ENCODE measurements at regions of chr2 and their contacts with region 1.

Region 1: GRCh38 chr2:219498280-219499057 is at the start of gene GMPPA:
- DNase-seq: peak; percentile 98
- ATAC-seq: peak; percentile 94
- H3K4me3 Mint-ChIP-seq: peak within 1 kb of the TSS; percentile 87
- H3K27ac Mint-ChIP-seq: peak within 1 kb of the TSS; percentile 78
- H3K4me1 Mint-ChIP-seq: peaks cover 31% of the 10 kb centered on the region
- H3K27me3 Mint-ChIP-seq: peaks cover 40% of the 10 kb centered on the region
- total RNA-seq, gene GMPPA: 36.5 to 42.6 TPM

Region 2: DNA sequence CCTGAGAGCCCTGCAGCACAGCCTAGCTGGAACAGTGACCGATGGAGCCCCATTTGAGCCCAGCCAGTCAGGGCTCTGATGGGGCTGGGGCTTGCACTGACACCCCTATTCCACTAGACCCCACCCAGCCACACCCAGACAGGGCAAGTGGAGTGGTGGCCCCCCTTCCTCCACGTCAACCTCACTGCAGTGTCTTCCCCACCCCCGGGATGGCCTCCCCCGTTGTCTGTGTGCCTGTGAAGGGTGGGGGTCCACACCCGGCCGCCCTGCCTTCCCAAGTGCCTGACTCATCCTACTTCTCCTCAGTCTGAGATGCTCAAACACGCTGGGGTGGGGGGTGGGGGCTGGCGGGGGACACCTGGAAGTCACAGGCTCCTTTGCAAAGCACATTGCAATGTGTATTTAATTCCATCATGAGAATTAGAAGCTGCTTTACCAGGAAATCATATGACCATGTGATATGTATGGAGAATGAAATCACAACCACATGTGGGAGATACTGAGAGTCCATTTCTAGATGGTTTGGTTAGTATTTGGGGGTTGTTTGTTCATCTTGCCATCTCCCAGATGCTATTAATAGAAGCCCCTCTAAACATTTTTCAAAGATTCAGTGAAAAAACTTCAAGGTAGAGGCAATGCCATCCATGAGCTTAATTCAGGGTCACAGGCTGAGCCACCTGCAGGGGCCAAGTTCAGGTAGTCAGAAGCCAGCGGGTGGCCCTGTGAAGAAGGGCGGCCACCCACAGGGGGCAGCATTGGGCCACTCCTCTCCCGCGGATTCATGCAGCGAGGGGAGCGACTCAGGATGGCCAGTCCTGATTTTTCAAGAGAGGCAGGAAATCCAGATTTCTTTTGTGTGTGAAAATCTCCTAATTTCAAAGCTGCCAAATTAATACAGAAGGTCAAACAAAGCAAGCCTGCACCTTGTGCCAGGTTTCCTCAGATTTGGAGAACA is 22.5 kb before region 1 on chr2:
- CTCF ChIA-PET with region 1: interaction called, 14 read pairs
- DNase-seq: peak; percentile 70
- ATAC-seq: peak; percentile 77
- H3K4me3 Mint-ChIP-seq: no peak overlapping the region
- H3K27ac Mint-ChIP-seq: no peak overlapping the region
- H3K4me1 Mint-ChIP-seq: no peaks in the 10 kb centered on the region
- H3K27me3 Mint-ChIP-seq: no peaks in the 10 kb centered on the region

Region 3: DNA sequence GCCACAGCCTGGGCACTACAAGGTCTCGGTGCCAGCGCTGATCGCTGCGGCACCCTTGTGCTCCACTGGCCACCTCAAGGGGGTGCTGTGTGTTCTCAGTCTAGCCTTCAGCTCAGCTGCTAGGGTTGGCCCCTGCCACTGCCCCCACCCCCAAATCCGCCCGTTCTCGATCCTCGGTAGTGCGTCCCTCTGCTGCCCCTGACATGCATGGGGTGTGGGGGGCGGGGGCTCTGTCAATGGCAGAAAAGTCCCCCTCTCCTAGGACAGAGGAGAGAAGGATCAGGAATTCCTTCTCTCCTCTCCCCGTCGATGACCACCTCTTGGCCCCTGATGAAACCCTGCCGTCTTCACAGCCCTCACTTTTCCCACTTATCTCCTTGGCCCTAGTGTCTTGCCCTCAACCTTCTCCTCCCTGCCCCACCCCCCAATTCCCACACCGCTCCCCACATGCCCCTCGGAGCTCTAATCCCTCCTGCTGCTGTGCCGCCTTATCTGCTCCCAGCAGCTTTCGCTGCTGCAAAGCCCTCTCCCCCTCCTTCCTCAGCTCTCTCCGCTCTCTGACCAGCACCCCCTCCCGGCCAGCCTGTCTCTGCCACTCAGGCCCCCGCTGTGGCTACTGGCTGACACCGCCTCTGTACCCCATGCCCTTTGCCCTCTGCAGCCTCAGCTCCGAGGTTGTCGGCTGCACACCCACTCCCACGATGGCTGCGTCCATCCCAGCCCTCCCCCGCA is 11.5 kb after region 1 on chr2:
- CTCF ChIA-PET with region 1: interaction called, 65 read pairs
- DNase-seq: peak; percentile 54
- ATAC-seq: peak; percentile 80
- H3K4me3 Mint-ChIP-seq: no peak overlapping the region
- H3K27ac Mint-ChIP-seq: no peak overlapping the region
- H3K4me1 Mint-ChIP-seq: peaks cover 4% of the 10 kb centered on the region
- H3K27me3 Mint-ChIP-seq: peaks cover 44% of the 10 kb centered on the region

Region 4: DNA sequence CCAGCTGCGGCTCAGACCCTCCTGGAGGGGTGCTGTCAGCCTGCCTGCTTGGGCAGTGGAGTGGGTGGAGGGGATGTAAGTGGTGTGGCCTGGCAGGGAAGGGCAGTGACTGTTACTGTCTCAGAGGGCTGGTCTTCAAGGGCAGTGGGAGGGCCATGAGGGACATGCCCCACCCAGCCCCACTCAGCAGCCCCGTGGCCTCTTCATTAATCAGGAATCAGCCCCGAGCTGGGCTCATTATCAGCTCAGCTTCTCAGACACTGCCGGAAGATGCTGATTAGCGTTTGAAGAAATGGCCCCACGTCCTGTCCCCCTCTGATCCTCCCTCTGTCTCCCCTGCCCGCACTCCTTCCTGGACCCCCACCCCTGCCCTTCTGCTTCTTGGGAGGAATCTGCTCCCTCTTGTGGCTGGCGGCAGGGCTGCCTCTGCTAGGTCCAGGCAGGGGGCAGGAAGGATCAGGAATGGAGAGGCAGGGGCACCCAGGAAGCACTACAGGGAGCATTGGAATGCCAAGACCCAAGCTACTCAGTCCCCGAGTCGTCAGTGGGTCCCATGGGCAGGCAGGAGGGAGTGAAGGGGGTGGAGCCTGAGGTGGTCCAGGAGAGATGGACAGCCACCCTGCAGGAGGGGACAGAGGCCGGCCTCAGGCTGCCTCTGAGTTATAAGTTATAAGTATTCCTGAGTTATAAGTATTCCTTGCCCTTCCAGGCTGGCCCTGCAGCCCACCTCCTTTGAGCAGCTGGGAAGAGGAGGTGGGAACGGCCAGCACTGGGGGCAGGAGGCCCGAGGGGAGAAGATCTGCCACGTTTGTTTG is 22.8 kb after region 1 on chr2:
- CTCF ChIA-PET with region 1: interaction called, 149 read pairs
- DNase-seq: no peak
- ATAC-seq: peak; percentile 23
- H3K4me3 Mint-ChIP-seq: no peak overlapping the region
- H3K27ac Mint-ChIP-seq: no peak overlapping the region
- H3K4me1 Mint-ChIP-seq: peaks cover 4% of the 10 kb centered on the region
- H3K27me3 Mint-ChIP-seq: peaks cover 71% of the 10 kb centered on the region

Region 5: GRCh38 chr2:219571311-219572236 is 73.1 kb after region 1 on chr2 and contains the start of gene OBSL1:
- CTCF ChIA-PET with region 1: no interaction called
- DNase-seq: no peak
- ATAC-seq: no peak
- H3K4me3 Mint-ChIP-seq: no peak within 1 kb of the TSS
- H3K27ac Mint-ChIP-seq: no peak within 1 kb of the TSS
- H3K4me1 Mint-ChIP-seq: no peaks in the 10 kb centered on the region
- H3K27me3 Mint-ChIP-seq: peaks cover 33% of the 10 kb centered on the region
- total RNA-seq, gene OBSL1: 0.16 TPM in 1 of 2 experiments, not detected in the other

Measured in activated CD8-positive, alpha-beta memory T cell treated with anti-CD3 and anti-CD28 coated beads, Interleukin-2, amount 10 ng/mL, durations not matched to agents 7 days and 5 days (primary cell).